ENCODE measurements at regions of chr18 and their contacts with region 1.

Region 1: DNA sequence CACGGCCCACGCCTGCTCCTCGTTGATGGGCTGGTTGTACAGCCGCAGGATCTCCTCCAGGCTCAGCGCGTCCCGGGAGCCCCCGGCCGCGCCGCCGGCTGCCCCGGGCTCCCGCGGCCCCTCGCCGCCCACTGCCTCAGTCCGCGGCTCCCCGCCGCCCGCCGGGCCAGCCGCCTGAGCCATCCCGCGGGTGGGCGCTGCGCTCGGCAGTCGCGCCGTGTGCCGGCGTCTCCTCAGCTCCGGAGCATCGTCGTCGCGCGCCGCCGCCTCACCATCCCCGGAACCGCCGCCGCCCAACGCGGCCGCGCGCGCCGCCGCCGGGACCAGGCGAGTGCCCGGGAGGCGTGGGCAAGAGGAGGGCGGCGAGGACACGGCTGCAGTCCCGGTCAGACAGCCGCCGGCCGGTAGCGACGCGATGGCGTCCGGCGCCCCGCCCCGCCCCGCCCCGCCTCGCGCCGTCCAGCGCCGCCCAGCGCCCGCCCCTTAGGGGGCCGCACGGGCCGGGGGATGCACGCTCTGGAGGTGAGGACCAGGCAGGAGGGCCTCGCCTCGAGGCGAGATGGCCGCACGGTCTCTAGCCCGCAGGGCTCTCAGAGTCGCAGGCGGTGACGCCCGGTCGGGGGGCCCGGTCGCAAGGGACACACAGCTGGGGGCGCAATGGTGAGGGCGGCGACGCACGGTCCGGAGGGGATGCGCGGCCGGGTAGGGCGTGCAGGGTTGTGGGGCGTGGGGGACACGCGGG is at the start of gene SPIRE1:
- DNase-seq: peak; percentile 89
- ATAC-seq: peak; percentile 90
- total RNA-seq, gene SPIRE1: 33.5 TPM

Region 2: GRCh38 chr18:12391618-12392165 is 266.2 kb before region 1 on chr18:
- intact Hi-C with region 1: loop called (anchors 5 kb)
- DNase-seq: no peak
- ATAC-seq: peak; percentile 94

Region 3: GRCh38 chr18:12534820-12535219 is 123.0 kb before region 1 on chr18:
- intact Hi-C with region 1: loop called (anchors 5 kb)
- DNase-seq: no peak
- ATAC-seq: no peak

Region 4: GRCh38 chr18:13279181-13280069 is 621.6 kb after region 1 on chr18:
- intact Hi-C with region 1: no loop called
- DNase-seq: no peak
- ATAC-seq: no peak

Region 5: GRCh38 chr18:14015416-14015815 is 1357.6 kb after region 1 on chr18:
- intact Hi-C with region 1: no loop called
- DNase-seq: no peak
- ATAC-seq: no peak